ENCODE measurements at regions of chr14 and their contacts with region 1.

Region 1: DNA sequence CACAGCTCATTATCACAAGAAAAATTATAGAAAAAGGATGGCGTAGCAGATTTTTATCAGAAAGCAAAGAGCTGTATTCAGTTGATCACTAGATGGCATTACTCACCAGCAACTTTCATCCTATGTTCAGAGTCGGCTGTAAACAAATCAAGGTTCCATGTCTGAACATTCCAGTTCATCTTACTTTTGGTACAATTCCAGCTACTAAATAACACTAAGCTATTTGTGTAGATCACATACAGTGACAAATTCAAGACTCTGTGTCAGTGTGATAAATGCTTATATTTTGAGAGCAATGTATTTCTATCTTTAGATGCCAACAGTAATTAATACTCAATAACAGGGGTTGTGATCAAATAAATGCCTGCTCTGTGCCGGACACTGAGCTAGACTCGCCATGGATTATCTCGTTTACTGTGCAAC is 30.1 kb downstream of the NRDE2 start:
- DNase-seq: no peak
- H3K4me3 ChIP-seq: no peak overlapping the region
- H3K27ac ChIP-seq: peak overlapping the region; percentile 42 to 71 (median 62)
- H3K4me1 ChIP-seq: peaks cover 4 to 25% (median 13%) of the 10 kb centered on the region in 4 donors
- H3K27me3 ChIP-seq: no peaks in the 10 kb centered on the region
- CTCF ChIP-seq: peak; percentile 48 to 67 (median 53)
- EP300 ChIP-seq: no peak
- POLR2A ChIP-seq: no peak

Region 2: GRCh38 chr14:90522571-90523191 is 221.0 kb after region 1 on chr14:
- in situ Hi-C with region 1: no loop called
- intact Hi-C with region 1: loop called (anchors 10 kb)
- DNase-seq: peak; percentile 49
- H3K4me3 ChIP-seq: no peak overlapping the region
- H3K27ac ChIP-seq: peak overlapping the region; percentile 41 to 72 (median 61)
- H3K4me1 ChIP-seq: peaks cover 8 to 40% (median 35%) of the 10 kb centered on the region in 4 donors
- H3K27me3 ChIP-seq: no peaks in the 10 kb centered on the region
- CTCF ChIP-seq: no peak
- EP300 ChIP-seq: no peak
- POLR2A ChIP-seq: no peak

Region 3: DNA sequence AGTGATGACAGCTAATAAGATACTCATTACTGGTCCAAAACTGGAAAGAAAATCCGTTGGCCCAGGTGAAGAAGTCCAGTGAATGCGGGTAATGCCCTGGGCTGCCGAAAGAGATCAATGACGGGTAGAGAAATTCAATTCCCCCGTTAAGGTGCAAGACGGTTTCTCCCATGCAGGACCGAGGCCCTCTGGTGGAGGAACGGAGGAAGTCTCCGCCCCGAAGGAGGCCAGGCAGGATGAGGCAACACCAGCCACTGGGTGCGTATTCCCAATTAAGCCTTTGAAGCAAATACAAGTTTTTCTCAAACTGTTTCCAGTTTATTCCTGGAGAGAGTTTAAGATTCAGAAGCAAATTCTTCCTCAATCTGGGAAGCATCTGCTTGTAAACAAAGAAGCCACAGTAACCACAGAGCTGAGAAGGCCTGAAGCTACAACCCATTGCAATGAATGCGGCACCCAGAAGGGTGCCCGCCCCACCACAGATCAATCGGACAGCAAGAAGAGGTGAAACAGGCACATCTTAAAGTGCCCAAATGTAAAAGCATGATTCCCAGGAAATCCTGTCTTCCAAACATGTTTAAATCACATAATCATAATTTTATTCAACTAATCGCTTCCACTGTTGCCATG is 396.0 kb after region 1 on chr14:
- in situ Hi-C with region 1: loop called in 2 of 4 experiments (anchors 25 kb)
- intact Hi-C with region 1: loop called (anchors 10 kb)
- DNase-seq: peak; percentile 83
- H3K4me3 ChIP-seq: no peak overlapping the region
- H3K27ac ChIP-seq: peak overlapping the region; percentile 68 to 83 (median 72)
- H3K4me1 ChIP-seq: peaks cover 0 to 24% (median 11%) of the 10 kb centered on the region in 4 donors
- H3K27me3 ChIP-seq: no peaks in the 10 kb centered on the region
- CTCF ChIP-seq: peak; percentile 94 to 97 (median 94)
- EP300 ChIP-seq: no peak
- POLR2A ChIP-seq: no peak

Region 4: GRCh38 chr14:90758028-90758889 is 456.6 kb after region 1 on chr14:
- in situ Hi-C with region 1: loop called in 1 of 4 experiments (anchors 10 kb)
- intact Hi-C with region 1: no loop called
- DNase-seq: peak; percentile 94
- H3K4me3 ChIP-seq: peak overlapping the region; percentile 3 to 52 (median 38)
- H3K27ac ChIP-seq: peak overlapping the region; percentile 85 to 89 (median 88)
- H3K4me1 ChIP-seq: peaks cover 9 to 20% (median 13%) of the 10 kb centered on the region in 4 donors
- H3K27me3 ChIP-seq: no peaks in the 10 kb centered on the region
- CTCF ChIP-seq: peak; percentile 77 to 94 (median 82)
- EP300 ChIP-seq: no peak
- POLR2A ChIP-seq: peak; percentile 45